Heart right ventricle (tissue), 16 donors: ENCODE measurements at regions of chr6 and their contacts with region 1.

Region 1: DNA sequence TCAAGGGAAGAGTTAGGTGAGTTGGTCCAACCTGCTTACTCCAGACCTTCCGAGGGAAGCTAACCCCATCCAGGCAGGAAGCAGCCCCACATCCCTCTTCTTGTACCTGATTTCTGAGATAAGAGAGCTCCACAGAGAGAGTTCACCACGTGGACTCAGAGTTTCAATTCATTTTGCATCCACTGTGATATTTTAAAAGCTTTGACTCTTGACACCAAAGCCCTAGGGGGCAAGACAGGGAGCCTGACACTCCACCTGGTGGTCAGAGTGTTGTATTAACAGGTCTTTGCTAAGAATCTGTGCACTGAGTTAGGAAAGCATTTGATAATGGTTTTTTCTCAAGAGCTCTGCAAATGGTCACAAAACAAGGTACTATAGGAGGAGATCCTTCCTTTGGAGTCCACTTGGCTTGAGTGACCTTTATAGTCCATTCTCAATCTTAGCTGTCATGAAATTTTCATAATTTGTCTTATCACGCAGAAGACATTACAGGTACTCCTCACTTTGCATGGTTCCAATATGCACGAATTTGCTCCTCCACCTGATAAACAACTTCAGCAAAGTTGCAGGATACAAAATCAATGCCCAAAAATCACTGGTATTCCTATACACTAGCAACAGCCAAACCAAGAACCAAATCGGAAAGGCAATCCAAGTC is 56.2 kb upstream of the RIPOR2 start:
- DNase-seq: peak; percentile 17 to 42
- ATAC-seq: peak in 6 of 8 donors; percentile 73 to 87 (median 80)
- H3K4me3 ChIP-seq: no peak overlapping the region
- H3K27ac ChIP-seq: peak overlapping the region in 1 of 10 donors; percentile 57
- H3K4me1 ChIP-seq: peaks cover 0 to 22% (median 0%) of the 10 kb centered on the region in 9 donors
- H3K27me3 ChIP-seq: no peaks in the 10 kb centered on the region
- CTCF ChIP-seq: peak; percentile 52 to 84 (median 81)

Region 2: GRCh38 chr6:24855395-24856245 is 136.3 kb before region 1 on chr6:
- intact Hi-C with region 1: loop called (anchors 1 to 5 kb)
- DNase-seq: peak; percentile 21 to 63
- ATAC-seq: peak; percentile 55 to 86 (median 70)
- H3K4me3 ChIP-seq: peak overlapping the region in 1 of 10 donors; percentile 4
- H3K27ac ChIP-seq: peak overlapping the region in 5 of 10 donors; percentile 3 to 88 (median 50)
- H3K4me1 ChIP-seq: peaks cover 0 to 56% (median 16%) of the 10 kb centered on the region in 9 donors
- H3K27me3 ChIP-seq: no peaks in the 10 kb centered on the region
- CTCF ChIP-seq: peak; percentile 83 to 96 (median 89)

Region 3: GRCh38 chr6:24933868-24934401 is 58.0 kb before region 1 on chr6:
- intact Hi-C with region 1: loop called in 2 of 10 experiments (anchors 10 kb)
- DNase-seq: no peak
- ATAC-seq: no peak
- H3K4me3 ChIP-seq: peak overlapping the region in 1 of 10 donors; percentile 55
- H3K27ac ChIP-seq: peak overlapping the region in 2 of 10 donors; percentile 41 to 87
- H3K4me1 ChIP-seq: peaks cover 7 to 57% (median 33%) of the 10 kb centered on the region in 9 donors
- H3K27me3 ChIP-seq: no peaks in the 10 kb centered on the region
- CTCF ChIP-seq: peak in 7 of 9 donors; percentile 19 to 67 (median 39)

Region 4: DNA sequence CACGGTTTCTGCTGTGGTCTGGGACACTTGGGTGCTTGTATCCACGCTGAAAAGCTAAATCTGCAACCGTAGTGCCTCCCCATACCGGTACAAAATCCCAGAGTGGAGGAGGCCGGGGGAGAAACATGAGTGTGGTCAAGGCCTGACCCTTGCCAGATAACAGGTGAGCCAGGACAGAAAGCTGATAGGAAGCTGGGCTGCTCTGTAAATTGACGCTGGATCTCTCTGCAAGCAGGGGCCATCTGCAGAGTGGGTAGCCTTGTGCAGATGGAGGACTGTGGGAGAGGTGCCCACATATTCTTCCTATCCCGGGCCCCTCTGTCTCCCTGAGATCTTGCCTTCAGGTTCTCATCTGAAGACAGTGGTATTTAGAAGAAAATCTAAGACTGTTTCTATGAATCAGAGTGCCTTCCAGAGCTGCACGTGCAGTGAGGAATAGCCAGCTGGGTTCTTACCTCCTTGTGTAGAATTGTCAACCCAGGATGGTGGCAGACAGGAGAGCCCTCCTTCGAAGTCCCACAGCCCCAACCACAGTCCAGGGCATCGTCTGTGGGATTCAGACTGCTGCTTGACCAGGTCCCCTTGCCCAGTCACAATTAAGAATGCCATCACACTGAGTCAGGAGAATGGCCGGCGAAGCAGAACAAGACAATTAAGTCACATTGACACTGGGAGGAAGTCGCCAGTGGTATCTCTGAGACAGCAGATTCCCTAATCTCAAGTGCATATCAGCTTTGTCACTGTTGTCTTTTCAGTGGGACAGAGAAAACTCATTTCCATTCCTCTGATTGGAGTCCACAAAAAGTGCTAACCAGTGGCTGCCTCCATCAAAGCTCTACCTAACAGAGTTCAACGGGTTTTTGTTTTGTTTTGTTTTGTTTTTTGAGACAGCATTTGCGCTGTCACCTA is 43.8 kb after region 1 on chr6:
- intact Hi-C with region 1: no loop called
- DNase-seq: no peak
- ATAC-seq: no peak
- H3K4me3 ChIP-seq: peak overlapping the region in 1 of 10 donors; percentile 41
- H3K27ac ChIP-seq: peak overlapping the region in 2 of 10 donors; percentile 33 to 83
- H3K4me1 ChIP-seq: peaks cover 0 to 42% (median 0%) of the 10 kb centered on the region in 9 donors
- H3K27me3 ChIP-seq: no peaks in the 10 kb centered on the region
- CTCF ChIP-seq: no peak

Region 5: GRCh38 chr6:25061289-25061936 is 69.5 kb after region 1 on chr6:
- intact Hi-C with region 1: loop called in 2 of 10 experiments (anchors 5 to 10 kb)
- DNase-seq: peak in 1 of 2 donors; percentile 18
- ATAC-seq: peak in 2 of 8 donors; percentile 11 to 15
- H3K4me3 ChIP-seq: no peak overlapping the region
- H3K27ac ChIP-seq: peak overlapping the region in 2 of 10 donors; percentile 3 to 37
- H3K4me1 ChIP-seq: peaks cover 0 to 24% (median 0%) of the 10 kb centered on the region in 9 donors
- H3K27me3 ChIP-seq: no peaks in the 10 kb centered on the region
- CTCF ChIP-seq: no peak